ENCODE measurements at regions of chr5 and their contacts with region 1.

Region 1: GRCh38 chr5:151800532-151800931 is 28.8 kb downstream of the G3BP1 start:
- DNase-seq: no peak
- CTCF ChIP-seq: no peak

Region 2: DNA sequence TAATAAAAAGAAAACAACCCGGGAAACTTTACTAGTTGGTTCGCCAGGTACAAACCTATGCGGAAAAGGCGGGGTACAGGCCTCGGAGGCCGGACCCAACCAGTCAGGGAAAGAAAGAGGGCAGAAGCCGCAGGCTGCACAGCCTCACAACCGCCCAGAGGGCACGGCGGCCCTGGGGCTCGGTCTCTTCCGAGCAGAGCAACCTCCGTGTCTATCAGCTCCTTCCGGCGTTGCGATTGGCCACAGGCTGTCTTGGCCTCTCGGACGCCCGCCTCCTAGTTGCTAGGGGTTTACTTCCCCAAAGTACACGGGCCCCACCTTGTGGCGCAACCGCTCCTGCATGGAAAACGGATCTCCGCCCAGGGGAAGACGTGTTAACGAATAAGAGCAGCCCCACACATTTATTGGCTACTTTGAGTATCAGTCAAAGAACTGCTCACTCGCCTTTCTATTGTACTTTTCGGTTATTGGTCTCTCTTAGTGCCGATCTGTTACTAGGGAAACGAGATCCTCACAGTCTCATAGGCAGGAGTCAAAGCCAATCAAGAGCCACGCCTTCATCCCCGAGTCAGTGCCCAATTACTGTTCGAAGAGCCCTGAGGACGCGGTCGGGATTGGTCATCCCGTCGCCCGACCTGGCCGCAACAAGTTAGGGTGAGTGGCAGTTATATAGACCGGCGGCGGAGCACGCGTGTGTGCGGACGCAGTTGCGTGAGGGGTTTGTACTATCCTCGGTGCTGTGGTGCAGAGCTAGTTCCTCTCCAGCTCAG is 29.1 kb before region 1 on chr5 and contains the start of gene G3BP1:
- CTCF ChIA-PET with region 1: no interaction called
- POLR2A ChIA-PET with region 1: no interaction called
- DNase-seq: peak; percentile 97
- CTCF ChIP-seq: peak; percentile 68

Region 3: GRCh38 chr5:151811593-151812321 is 11.2 kb after region 1 on chr5:
- CTCF ChIA-PET with region 1: interaction called, 12 read pairs
- POLR2A ChIA-PET with region 1: no interaction called
- DNase-seq: no peak
- CTCF ChIP-seq: no peak

Region 4: GRCh38 chr5:151880324-151880723 is 79.8 kb after region 1 on chr5:
- CTCF ChIA-PET with region 1: no interaction called
- POLR2A ChIA-PET with region 1: no interaction called
- DNase-seq: no peak
- CTCF ChIP-seq: no peak

Measured in GM10248 (cell line).